ENCODE measurements at regions of chr3 and their contacts with region 1.

Region 1: DNA sequence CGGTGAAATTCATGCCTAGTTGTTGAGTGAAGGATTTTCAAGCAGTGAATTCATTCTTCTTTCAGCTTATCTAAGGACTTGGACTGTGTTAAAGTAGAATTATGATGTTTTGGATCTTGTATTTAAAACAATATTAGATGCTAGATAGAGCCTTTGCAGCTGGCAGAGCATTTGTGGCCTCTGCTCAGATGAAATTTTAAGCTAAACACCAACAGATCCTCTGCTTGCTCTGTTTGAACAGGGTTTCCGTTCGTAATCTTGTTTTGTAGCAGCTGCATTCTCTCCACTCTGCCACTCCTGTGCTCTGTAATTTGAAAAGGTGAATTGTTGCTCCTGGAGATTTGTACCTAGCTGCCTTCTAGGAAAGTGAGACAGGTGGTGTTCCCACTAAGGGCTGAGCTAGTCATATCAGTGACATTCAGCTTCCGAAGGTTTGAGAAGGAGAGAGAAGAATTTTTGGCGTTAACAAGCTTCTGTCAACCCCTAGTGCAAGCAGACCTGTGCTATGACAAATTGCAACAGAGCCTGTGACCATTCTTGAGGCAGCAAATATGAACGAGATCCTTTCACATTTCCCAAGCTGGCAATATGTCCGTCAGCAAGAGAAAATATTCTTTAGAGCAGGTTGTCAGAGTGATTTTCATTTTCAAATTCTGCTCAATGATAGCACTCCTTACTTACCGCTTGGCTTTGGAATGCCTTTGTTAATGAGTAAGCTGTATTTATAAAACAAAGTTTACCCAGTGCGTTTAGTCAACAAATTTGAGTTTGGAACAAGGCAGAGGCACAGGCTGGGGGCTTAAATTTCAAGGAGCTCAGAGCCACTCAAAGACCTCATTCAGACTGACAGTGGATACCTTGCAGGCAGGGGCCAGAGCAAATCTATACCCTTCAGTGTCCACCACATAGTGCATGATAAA is 5.3 kb downstream of the CHST2 start:
- DNase-seq: peak in 1 of 4 experiments; percentile 63
- ATAC-seq: peak; percentile 26
- H3K4me3 ChIP-seq: peak overlapping the region; percentile 34
- H3K27ac ChIP-seq: peak overlapping the region; percentile 51
- H3K4me1 ChIP-seq: peaks cover 24 to 36% of the 10 kb centered on the region in 2 experiments; a peak in 4 of 5 replicates
- H3K27me3 ChIP-seq: no peaks in the 10 kb centered on the region
- CTCF ChIP-seq: no peak
- EP300 ChIP-seq: no peak
- POLR2A ChIP-seq: no peak
- RAD21 ChIP-seq: no peak

Region 2: GRCh38 chr3:143135150-143135549 is 10.3 kb after region 1 on chr3:
- CTCF ChIA-PET with region 1: no interaction called
- POLR2A ChIA-PET with region 1: interaction called, 18 read pairs
- in situ Hi-C with region 1: no loop called
- intact Hi-C with region 1: no loop called
- DNase-seq: peak in 1 of 4 experiments; percentile 40
- ATAC-seq: no peak
- H3K4me3 ChIP-seq: no peak overlapping the region
- H3K27ac ChIP-seq: no peak overlapping the region
- H3K4me1 ChIP-seq: peaks cover 0 to 14% of the 10 kb centered on the region in 2 experiments; a peak in 4 of 5 replicates
- H3K27me3 ChIP-seq: no peaks in the 10 kb centered on the region
- CTCF ChIP-seq: peak in 1 of 3 experiments; percentile 13; a peak in 1 of 6 replicates
- EP300 ChIP-seq: no peak
- POLR2A ChIP-seq: no peak
- RAD21 ChIP-seq: peak; percentile 11 to 22; a peak in 1 of 4 replicates

Region 3: DNA sequence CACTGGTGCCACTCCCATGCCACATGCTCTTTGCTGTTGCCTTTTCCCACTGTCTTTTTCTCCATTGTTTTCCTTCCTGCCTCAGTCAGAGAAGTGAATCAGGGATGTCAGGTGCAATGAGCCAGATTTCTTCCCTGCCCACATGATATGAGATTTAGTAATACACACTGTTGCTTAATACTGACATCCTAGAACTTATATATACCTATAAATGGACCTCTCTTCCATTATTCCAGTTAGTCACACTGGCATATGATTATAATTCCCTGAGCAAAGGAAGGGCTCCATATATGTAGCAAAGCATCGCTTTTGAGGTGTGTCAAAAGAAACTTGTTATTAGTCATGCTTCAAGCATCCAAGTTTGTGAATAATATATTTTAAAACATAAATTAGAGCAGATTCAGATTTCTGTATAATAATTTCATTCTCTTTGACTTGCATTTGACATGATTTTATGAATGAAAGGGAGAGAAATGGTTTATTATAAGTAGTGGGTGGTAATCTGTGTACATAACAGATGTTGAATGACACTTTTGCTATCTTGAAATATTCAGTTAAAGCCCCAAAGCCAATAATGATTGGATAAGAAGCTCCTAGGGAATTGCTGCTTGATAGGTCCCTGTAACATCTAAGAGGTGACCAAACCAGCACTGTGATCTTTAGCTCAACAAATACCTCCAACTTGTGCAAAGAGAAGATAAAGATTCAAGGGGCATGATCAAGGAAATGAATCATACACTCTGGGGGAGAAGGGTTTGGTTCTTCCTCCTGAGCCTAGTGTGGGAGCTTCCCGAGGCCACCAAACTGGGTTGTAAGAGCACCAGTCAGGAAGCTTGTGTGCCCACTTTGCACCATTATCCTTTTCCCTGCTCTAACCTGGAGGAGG is 43.4 kb after region 1 on chr3:
- CTCF ChIA-PET with region 1: no interaction called
- POLR2A ChIA-PET with region 1: no interaction called
- in situ Hi-C with region 1: no loop called
- intact Hi-C with region 1: no loop called
- DNase-seq: peak; percentile 62 to 85 (median 72)
- ATAC-seq: peak; percentile 77
- H3K4me3 ChIP-seq: no peak overlapping the region
- H3K27ac ChIP-seq: peak overlapping the region; percentile 71; the same call in 2 of the 3 replicates
- H3K4me1 ChIP-seq: peaks cover 15 to 61% of the 10 kb centered on the region in 2 experiments; a peak in 4 of 5 replicates
- H3K27me3 ChIP-seq: no peaks in the 10 kb centered on the region
- CTCF ChIP-seq: no peak
- EP300 ChIP-seq: peak; percentile 90; the same call in 1 of the 2 replicates
- POLR2A ChIP-seq: no peak
- RAD21 ChIP-seq: 0 out of 4 replicates have a peak, but pooled peaks of 1 of the 2 experiments have one; percentile 8

Region 4: GRCh38 chr3:143328455-143328854 is 203.6 kb after region 1 on chr3:
- CTCF ChIA-PET with region 1: no interaction called
- POLR2A ChIA-PET with region 1: no interaction called
- in situ Hi-C with region 1: no loop called
- intact Hi-C with region 1: loop called (anchors 1 kb)
- DNase-seq: peak in 3 of 4 experiments; percentile 22 to 37 (median 29)
- ATAC-seq: peak; percentile 84
- H3K4me3 ChIP-seq: no peak overlapping the region
- H3K27ac ChIP-seq: no peak overlapping the region
- H3K4me1 ChIP-seq: peaks cover 0 to 8% of the 10 kb centered on the region in 2 experiments; a peak in 3 of 5 replicates
- H3K27me3 ChIP-seq: no peaks in the 10 kb centered on the region
- CTCF ChIP-seq: peak; percentile 35 to 63 (median 45); a peak in 5 of 6 replicates
- EP300 ChIP-seq: no peak
- POLR2A ChIP-seq: no peak
- RAD21 ChIP-seq: peak in 1 of 2 experiments; percentile 43; a peak in 2 of 4 replicates

Region 5: DNA sequence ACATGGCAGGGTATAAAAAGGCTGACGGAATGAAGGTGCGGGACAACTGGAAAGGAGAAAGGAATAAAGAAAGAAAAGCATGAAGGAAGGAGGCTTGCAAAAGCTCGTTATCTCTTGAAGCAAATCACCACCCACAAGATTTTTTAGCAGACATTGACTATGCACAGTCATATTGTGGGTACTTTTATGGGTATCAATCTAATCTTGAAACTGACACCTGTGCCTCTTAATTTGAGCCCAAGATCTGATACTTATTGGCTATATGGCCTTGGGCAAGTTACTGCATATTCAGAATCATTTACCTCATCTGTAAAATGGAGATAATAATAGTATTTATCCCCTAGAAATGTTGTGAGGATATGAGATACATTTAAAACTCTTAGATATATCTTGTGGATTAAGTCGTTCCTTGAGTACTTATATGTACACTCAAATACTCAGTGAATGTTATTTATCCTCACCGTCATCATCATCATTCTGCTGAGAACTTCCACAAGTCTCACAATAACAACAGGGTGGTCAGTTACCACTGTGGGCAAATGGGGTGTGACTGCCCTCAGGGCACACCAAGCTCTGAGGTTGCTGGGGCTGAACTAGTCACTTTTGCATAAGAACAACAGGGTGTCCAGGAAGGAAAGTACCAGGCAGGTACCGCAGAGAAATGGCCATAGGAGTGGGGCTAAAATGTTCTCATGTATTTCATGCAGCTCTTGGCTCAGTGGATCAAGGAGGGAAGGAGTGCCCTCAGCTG is 457.3 kb after region 1 on chr3:
- CTCF ChIA-PET with region 1: no interaction called
- POLR2A ChIA-PET with region 1: no interaction called
- in situ Hi-C with region 1: no loop called
- intact Hi-C with region 1: no loop called
- DNase-seq: no peak
- ATAC-seq: no peak
- H3K4me3 ChIP-seq: no peak overlapping the region
- H3K27ac ChIP-seq: no peak overlapping the region
- H3K4me1 ChIP-seq: no peaks in the 10 kb centered on the region
- H3K27me3 ChIP-seq: peaks cover 14 to 23% of the 10 kb centered on the region in 2 experiments; a peak in 4 of 5 replicates
- CTCF ChIP-seq: no peak
- EP300 ChIP-seq: no peak
- POLR2A ChIP-seq: no peak
- RAD21 ChIP-seq: no peak